Activated CD4-positive, alpha-beta memory T cell treated with anti-CD3 and anti-CD28 coated beads for 36 hours (primary cell): ENCODE measurements at regions of chr9 and their contacts with region 1.

Region 1: DNA sequence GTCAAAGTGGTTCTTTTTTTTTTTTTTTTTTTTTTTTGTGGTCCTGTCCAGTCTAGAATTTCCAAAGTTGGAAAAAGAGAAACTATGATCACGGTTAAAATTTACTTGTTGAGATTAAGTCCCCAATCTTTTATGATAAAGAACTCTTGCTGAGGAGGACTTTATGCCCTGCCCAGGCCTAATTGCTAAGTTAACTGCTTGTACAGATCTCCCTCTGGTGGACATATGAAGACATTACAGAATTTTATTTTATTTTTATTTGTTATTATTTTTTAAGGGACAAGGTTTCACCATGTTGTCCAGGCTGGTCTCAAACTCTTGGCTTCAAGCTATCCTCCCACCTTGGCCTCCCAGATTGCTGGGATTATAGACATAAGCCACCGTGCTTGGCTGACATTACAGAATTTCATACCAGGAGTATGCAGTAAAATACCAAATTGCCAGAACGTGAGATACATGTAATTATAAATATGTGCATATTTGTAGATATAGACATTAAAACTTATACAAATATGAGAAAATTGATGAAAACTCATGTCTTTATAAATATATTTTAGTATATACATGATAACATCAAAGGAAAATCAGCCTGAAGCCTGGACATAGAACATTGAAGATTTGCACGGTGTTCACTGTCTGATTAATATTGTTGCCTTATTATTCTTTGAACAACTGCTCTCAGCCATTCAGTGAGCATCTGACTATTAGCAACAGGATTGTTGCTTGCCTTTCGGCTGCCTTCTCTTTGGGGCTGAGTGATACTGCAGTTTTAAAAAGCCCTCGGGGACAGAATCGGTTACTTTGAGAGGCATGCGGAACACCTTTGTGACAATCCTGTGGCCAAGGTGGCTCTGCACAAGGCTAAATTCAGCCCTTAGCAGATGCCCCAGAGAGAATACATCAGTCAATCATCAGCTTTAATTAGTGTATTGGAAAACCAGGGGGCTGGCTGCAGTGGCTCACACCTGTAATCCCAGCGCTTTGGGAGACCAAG is 91.0 kb downstream of the RFK start:
- DNase-seq: no peak
- H3K4me3 Mint-ChIP-seq: no peak overlapping the region
- H3K27ac Mint-ChIP-seq: no peak overlapping the region
- H3K4me1 Mint-ChIP-seq: no peaks in the 10 kb centered on the region
- H3K27me3 Mint-ChIP-seq: peaks cover 9% of the 10 kb centered on the region

Region 2: GRCh38 chr9:75200892-75201470 is 1102.3 kb before region 1 on chr9:
- CTCF ChIA-PET with region 1: interaction called, 4 read pairs
- POLR2A ChIA-PET with region 1: no interaction called
- intact Hi-C with region 1: loop called (anchors 2 kb)
- DNase-seq: no peak
- H3K4me3 Mint-ChIP-seq: no peak overlapping the region
- H3K27ac Mint-ChIP-seq: no peak overlapping the region
- H3K4me1 Mint-ChIP-seq: no peaks in the 10 kb centered on the region
- H3K27me3 Mint-ChIP-seq: no peaks in the 10 kb centered on the region

Region 3: GRCh38 chr9:75265525-75265972 is 1037.7 kb before region 1 on chr9:
- CTCF ChIA-PET with region 1: interaction called, 9 read pairs
- POLR2A ChIA-PET with region 1: no interaction called
- intact Hi-C with region 1: loop called (anchors 2 kb)
- DNase-seq: peak; percentile 55
- H3K4me3 Mint-ChIP-seq: no peak overlapping the region
- H3K27ac Mint-ChIP-seq: no peak overlapping the region
- H3K4me1 Mint-ChIP-seq: no peaks in the 10 kb centered on the region
- H3K27me3 Mint-ChIP-seq: no peaks in the 10 kb centered on the region

Region 4: GRCh38 chr9:76313771-76314170 is 10.5 kb after region 1 on chr9:
- CTCF ChIA-PET with region 1: interaction called, 12 read pairs
- POLR2A ChIA-PET with region 1: interaction called, 4 read pairs
- intact Hi-C with region 1: no loop called
- DNase-seq: no peak
- H3K4me3 Mint-ChIP-seq: no peak overlapping the region
- H3K27ac Mint-ChIP-seq: no peak overlapping the region
- H3K4me1 Mint-ChIP-seq: no peaks in the 10 kb centered on the region
- H3K27me3 Mint-ChIP-seq: no peaks in the 10 kb centered on the region

Region 5: GRCh38 chr9:77648234-77649120 is 1345.2 kb after region 1 on chr9 and contains the start of gene GNA14:
- CTCF ChIA-PET with region 1: no interaction called
- POLR2A ChIA-PET with region 1: no interaction called
- intact Hi-C with region 1: no loop called
- DNase-seq: peak; percentile 18
- H3K4me3 Mint-ChIP-seq: peak within 1 kb of the TSS; percentile 65
- H3K27ac Mint-ChIP-seq: no peak within 1 kb of the TSS
- H3K4me1 Mint-ChIP-seq: peaks cover 14% of the 10 kb centered on the region
- H3K27me3 Mint-ChIP-seq: peaks cover 35% of the 10 kb centered on the region
- total RNA-seq, gene GNA14: not detected